ENCODE measurements at regions of chr1 and their contacts with region 1.

Region 1: GRCh38 chr1:244864253-244865027 is at the start of gene HNRNPU:
- DNase-seq: peak; percentile 99
- H3K4me3 ChIP-seq: peak within 1 kb of the TSS; percentile 84
- H3K27ac ChIP-seq: peak within 1 kb of the TSS; percentile 86
- H3K4me1 ChIP-seq: peaks cover 45% of the 10 kb centered on the region
- CTCF ChIP-seq: peak; percentile 50
- total RNA-seq, gene HNRNPU: 426 and 592 TPM in 2 replicates

Region 2: GRCh38 chr1:244652699-244653466 is 211.6 kb before region 1 on chr1 and contains the start of gene DESI2:
- CTCF ChIA-PET with region 1: no interaction called
- POLR2A ChIA-PET with region 1: no interaction called
- intact Hi-C with region 1: loop called (anchors 2 kb)
- DNase-seq: peak; percentile 100
- H3K4me3 ChIP-seq: peak within 1 kb of the TSS; percentile 82
- H3K27ac ChIP-seq: peak within 1 kb of the TSS; percentile 81
- H3K4me1 ChIP-seq: peaks cover 27% of the 10 kb centered on the region
- CTCF ChIP-seq: peak; percentile 71
- total RNA-seq, gene DESI2: 40.0 and 40.6 TPM in 2 replicates

Region 3: DNA sequence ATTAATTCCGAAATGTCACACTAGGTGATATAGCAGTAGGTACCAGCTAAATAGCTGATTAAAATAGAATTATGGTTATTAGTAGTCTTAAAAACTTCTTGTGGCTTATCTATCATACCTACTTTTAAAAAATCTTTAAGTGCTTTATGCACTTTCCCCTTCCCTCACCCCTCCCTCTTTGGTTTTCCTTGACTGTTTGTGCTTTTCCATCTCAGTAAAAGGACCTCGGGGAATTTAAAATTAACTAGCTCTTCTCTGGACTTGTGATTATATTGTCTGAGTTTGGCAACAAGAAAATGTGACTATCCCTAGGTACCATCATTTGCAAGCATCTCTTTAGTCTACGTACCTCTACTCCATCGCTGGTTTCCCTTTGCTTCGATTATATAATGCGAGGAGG is 17.8 kb before region 1 on chr1:
- CTCF ChIA-PET with region 1: interaction called, 3 read pairs
- POLR2A ChIA-PET with region 1: interaction called, 40 read pairs
- intact Hi-C with region 1: no loop called
- DNase-seq: no peak
- H3K4me3 ChIP-seq: no peak overlapping the region
- H3K27ac ChIP-seq: no peak overlapping the region
- H3K4me1 ChIP-seq: no peaks in the 10 kb centered on the region
- CTCF ChIP-seq: no peak

Region 4: DNA sequence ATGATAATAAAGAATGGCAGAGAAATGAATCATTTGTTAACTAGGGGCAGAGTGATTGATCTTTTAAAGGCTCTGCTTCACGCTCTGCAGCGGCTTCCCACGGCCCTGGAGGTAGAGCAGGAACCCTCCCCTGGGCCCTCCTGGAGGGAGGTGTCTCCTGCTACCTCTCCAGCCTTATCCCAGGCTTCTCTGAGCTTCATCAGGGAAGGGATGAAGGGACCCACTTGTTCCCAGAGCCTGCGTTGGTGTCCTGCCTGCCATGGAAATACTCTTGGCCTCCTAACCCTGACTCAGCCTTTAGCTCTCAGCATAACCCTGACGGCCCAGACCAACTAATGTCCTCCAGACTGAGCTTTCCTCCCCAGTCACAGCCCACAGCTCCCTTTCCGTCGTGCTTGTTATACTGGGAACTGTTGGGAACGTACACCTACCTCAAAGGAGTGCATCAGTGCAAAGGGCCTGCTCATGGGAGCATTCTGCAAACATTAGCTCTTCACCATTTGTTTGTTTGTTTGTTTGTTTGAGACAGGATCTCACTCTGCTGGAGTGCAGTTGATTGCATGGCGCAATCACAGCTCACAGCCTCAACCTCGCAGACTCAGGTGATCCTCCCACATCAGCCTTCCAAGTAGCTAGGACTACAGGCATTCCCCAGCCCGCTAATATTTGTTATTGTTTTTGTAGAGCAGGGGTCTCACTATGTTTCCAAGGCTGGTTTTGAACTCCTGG is 17.3 kb after region 1 on chr1:
- CTCF ChIA-PET with region 1: no interaction called
- POLR2A ChIA-PET with region 1: interaction called, 17 read pairs
- intact Hi-C with region 1: no loop called
- DNase-seq: no peak
- H3K4me3 ChIP-seq: no peak overlapping the region
- H3K27ac ChIP-seq: no peak overlapping the region
- H3K4me1 ChIP-seq: no peaks in the 10 kb centered on the region
- CTCF ChIP-seq: no peak

Region 5: DNA sequence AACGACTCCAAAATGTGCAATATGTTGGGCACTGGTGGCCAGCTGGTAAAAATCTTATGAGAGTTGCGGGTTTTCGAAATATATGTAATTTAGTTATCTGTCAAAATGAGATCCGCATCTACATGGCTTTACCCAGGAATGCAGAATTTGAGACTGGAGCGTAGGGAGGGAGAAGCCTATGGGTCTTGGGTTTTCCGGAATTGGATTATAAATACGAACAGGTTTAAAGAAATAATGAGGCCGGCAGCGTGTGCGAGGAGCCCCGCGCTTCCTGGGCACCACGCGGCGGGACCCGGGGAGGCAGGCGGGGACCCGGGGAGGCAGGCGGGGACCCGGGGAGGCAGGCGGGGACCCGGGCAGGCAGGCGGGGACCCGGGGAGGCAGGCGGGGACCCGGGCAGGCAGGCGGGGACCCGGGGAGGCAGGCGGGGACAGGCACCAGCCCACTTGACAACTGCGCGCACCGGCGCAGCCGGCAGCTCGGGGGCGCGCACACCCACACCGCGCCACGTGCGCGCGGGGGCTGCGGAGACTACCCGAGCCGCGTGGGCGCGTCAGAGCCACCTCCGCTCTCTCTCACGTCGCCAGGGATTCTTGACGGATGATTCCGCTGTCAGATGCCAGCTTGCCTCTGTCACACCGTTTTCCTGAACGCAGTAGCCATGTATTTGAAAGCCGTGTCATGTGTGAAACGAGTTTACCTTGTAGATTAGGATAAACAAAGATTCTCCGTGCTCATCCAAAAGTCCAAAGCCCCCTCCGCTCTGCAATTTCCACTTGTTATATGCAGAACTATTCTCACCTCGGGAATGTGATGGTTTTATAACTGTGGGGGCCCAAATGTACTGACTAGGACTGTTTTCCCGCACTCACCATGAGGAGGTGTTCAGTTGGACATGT is 54.2 kb after region 1 on chr1:
- CTCF ChIA-PET with region 1: interaction called, 3 read pairs
- POLR2A ChIA-PET with region 1: interaction called, 15 read pairs
- intact Hi-C with region 1: loop called (anchors 1 kb)
- DNase-seq: peak; percentile 73
- H3K4me3 ChIP-seq: peak overlapping the region; percentile 62
- H3K27ac ChIP-seq: peak overlapping the region; percentile 89
- H3K4me1 ChIP-seq: peaks cover 52% of the 10 kb centered on the region
- CTCF ChIP-seq: peak; percentile 33; the same call in 1 of the 2 replicates

Region 6: DNA sequence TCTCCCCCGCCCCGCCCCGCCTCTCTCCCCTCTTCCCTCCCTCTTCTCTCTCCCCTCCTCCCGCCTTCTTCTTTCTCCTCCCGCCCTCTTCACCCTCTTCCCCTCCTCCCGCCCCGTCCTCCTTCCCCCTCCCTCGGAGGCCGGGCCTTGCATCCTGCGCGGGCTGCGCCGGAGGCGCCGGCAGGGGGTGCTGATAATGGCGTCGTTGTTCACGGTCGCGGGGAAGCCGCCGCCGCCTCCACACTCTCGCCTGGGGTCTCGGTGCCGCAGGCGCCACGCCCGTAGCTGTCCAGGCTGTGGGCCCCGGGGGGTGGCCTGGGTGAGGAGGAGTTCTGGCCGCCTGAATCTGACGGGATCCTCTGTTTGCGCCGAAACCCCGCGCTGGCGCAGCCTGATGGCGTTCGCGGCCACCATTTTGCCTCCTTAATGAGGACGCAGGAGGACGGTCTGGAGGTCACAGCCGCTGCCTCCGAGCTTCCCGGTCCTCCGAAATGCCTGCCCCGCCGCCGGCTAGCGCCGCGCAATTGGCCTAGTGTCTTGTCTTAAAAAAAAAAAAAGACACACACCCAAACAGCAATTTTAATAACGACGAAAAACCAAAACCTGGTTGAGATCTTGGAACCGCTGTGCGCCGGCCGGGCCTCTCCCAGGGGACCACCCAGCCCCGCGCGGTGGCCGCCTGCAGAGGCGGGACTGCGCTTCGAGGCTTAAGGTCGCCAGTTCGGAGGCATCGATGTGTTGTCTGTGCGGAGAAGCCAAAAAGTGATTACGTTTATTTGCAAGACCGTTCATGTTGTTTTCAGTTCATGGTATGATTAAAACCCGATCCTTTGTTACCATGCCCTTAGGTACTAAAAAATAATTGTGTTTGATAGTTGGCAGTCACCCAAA is 106.5 kb after region 1 on chr1:
- CTCF ChIA-PET with region 1: no interaction called
- POLR2A ChIA-PET with region 1: interaction called, 46 read pairs
- intact Hi-C with region 1: loop called (anchors 1 kb)
- DNase-seq: peak; percentile 96
- H3K4me3 ChIP-seq: peak overlapping the region; percentile 85
- H3K27ac ChIP-seq: peak overlapping the region; percentile 97
- H3K4me1 ChIP-seq: peaks cover 30% of the 10 kb centered on the region
- CTCF ChIP-seq: peak; percentile 75

Measured in OCI-LY7 (cell line).